Activated T-helper 1 cell treated with anti-CD3 and anti-CD28 coated beads, Interleukin-12 subunit alpha, Interleukin-12 subunit beta, Interleukin-2, Interleukin-4 antibody, amounts not matched to agents 30 ng/mL and 10 ng/mL and 1 ng/mL, durations not matched to agents 14 hours and 24 hours and 36 hours (primary cell): ENCODE measurements at regions of chr9 and their contacts with region 1.

Region 1: DNA sequence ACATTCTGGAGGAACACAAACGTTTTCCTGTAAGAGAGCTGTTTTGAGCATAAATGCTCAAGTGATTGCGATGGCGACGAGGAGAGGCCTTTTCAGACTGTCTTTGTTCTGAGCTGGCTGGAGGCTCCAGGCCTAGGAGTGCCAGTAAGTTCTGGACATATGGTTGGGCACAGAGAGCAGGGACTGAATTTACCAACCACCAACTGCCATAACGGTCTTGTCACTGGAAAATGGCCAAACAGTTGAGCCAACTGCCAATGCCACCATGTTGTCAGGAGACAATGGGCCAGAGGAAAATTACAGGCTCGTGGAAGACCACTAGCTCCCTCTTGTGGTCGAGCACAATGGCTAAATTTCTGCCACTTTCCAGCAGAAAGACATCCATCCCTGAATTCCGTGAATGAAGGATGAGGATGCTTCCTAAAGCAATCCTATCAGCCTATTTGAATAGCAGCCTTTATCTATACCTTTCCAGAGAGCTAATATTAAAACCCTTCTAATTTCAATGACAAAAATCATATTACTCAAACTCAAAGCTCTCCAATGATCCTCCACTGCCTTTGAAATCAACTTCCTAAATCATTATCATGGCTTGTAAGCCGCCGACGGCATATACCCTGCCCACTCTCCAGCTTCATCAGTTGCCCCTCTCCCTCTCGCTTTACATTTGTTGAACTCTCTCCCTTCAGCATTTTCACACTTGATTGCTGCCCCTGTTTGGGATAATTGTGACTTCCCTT is 66.9 kb upstream of the GLIS3 start:
- DNase-seq: no peak
- H3K4me3 Mint-ChIP-seq: no peak overlapping the region
- H3K27ac Mint-ChIP-seq: no peak overlapping the region
- H3K4me1 Mint-ChIP-seq: no peaks in the 10 kb centered on the region
- H3K27me3 Mint-ChIP-seq: peaks cover 6% of the 10 kb centered on the region

Region 2: GRCh38 chr9:3240656-3241268 is 1126.0 kb before region 1 on chr9:
- intact Hi-C with region 1: loop called (anchors 2 kb)
- DNase-seq: peak; percentile 25
- H3K4me3 Mint-ChIP-seq: no peak overlapping the region
- H3K27ac Mint-ChIP-seq: no peak overlapping the region
- H3K4me1 Mint-ChIP-seq: no peaks in the 10 kb centered on the region
- H3K27me3 Mint-ChIP-seq: no peaks in the 10 kb centered on the region

Region 3: GRCh38 chr9:3467593-3468219 is 899.1 kb before region 1 on chr9:
- intact Hi-C with region 1: loop called (anchors 5 kb)
- DNase-seq: peak; percentile 40
- H3K4me3 Mint-ChIP-seq: no peak overlapping the region
- H3K27ac Mint-ChIP-seq: no peak overlapping the region
- H3K4me1 Mint-ChIP-seq: peaks cover 6% of the 10 kb centered on the region
- H3K27me3 Mint-ChIP-seq: no peaks in the 10 kb centered on the region

Region 4: DNA sequence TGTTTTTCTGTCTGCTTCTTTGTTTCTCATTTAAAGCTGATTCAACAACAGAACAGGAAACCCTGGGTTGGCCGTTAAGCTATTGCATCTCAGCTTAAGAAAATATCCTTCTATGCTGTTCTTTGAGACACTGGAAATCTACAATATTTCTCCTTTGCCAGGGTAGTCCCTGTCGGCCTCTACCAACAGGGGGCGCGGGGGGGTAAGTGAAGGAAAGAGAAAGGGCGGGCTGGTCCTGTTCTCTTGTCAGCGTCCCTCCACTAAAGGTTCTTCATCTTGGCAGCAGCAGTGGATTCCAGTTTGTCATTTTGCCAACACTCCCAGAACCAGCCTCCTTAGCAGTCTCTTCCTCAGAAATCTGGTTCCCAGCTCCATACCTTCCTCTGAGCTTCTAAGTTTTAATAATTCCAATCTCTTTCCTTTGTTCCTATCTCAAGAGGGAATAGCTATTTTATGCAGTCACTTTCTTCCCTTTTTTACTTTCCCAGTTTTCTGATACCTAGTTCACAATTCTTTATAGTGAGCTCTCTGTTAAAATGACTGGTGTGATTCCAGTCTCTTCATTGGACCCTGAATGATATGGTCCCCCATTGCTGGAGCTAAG is 289.2 kb before region 1 on chr9:
- intact Hi-C with region 1: loop called (anchors 1 kb)
- DNase-seq: peak; percentile 2
- H3K4me3 Mint-ChIP-seq: no peak overlapping the region
- H3K27ac Mint-ChIP-seq: no peak overlapping the region
- H3K4me1 Mint-ChIP-seq: no peaks in the 10 kb centered on the region
- H3K27me3 Mint-ChIP-seq: peaks cover 5% of the 10 kb centered on the region

Region 5: DNA sequence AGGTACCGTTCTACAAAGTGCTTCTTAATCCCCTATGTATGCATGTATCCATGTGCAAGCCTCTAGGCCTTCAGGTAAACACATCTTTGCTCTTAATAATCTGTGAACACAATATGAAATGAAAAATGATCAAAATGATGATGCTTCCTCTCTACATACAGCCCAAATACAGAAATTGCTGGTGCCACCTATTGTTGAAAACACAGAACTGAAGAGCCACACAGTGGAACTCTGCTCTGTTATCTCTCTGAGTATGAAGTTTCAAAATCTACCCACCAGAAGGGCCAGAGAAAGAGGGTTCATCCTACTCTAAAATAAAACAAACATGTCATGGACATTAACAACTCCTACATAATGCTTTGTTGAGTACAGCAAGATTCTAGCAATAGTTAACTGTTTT is 138.2 kb before region 1 on chr9:
- intact Hi-C with region 1: loop called (anchors 10 kb)
- DNase-seq: no peak
- H3K4me3 Mint-ChIP-seq: no peak overlapping the region
- H3K27ac Mint-ChIP-seq: no peak overlapping the region
- H3K4me1 Mint-ChIP-seq: peaks cover 6% of the 10 kb centered on the region
- H3K27me3 Mint-ChIP-seq: peaks cover 7% of the 10 kb centered on the region

Region 6: DNA sequence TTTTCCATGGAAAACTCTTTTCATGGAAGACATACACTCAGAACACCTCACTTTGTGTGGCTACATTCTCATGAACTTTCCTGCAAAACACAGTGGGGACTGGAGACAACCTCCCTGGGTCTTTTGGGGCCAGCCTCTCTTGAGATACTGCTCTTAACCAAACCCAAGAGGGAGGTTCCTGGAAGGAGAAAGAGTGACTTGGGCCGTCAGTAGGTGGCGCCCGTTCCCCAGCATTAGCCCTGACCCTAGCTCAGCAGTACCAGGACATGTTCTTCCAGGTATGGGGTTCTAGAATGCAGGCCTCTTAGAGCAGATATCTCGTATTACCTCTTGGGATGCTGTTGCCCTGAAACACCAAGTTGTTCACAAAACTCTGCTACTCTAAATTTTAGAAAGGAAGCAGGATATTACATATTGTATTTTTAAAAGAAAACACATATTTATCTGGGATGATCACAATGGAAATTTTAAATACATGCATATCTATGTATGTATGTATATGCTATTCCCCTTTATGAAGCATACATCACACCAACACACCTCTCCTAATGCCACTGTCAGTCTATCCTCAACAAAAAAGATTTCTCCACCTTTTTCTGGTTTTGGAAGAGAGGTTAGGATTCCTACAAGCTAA is 51.1 kb before region 1 on chr9:
- intact Hi-C with region 1: loop called (anchors 1 kb)
- DNase-seq: peak; percentile 60
- H3K4me3 Mint-ChIP-seq: no peak overlapping the region
- H3K27ac Mint-ChIP-seq: no peak overlapping the region
- H3K4me1 Mint-ChIP-seq: peaks cover 5% of the 10 kb centered on the region
- H3K27me3 Mint-ChIP-seq: peaks cover 13% of the 10 kb centered on the region

Region 7: DNA sequence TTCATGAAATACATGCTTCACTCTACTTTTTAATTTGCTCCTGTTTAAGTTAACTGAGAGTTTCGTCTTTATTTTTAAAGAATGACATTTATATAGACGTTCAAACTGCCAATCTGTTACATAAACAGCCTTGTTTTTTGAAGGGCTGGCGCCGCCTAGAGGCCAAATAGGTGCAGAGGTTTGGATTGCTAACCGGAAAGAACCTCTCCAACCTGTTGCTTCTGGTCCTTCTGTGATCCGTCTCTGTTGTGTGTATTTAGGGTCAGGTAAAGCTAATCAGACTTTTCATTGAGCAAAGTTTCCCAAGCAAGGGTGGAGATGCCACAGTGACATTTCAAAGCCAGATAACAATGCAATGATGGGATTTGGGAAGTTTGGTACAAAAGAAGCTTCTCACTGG is 27.4 kb before region 1 on chr9:
- intact Hi-C with region 1: loop called (anchors 2 kb)
- DNase-seq: peak; percentile 69
- H3K4me3 Mint-ChIP-seq: no peak overlapping the region
- H3K27ac Mint-ChIP-seq: peak overlapping the region; percentile 77
- H3K4me1 Mint-ChIP-seq: peaks cover 10% of the 10 kb centered on the region
- H3K27me3 Mint-ChIP-seq: peaks cover 4% of the 10 kb centered on the region